GM12878 (cell line): ENCODE measurements at regions of chr3 and their contacts with region 1.

Region 1: GRCh38 chr3:33681667-33682066 is 36.4 kb downstream of the CLASP2 start:
- DNase-seq: no peak
- ATAC-seq: no peak
- H3K4me3 ChIP-seq: no peak overlapping the region
- H3K27ac ChIP-seq: no peak overlapping the region
- H3K4me1 ChIP-seq: no peaks in the 10 kb centered on the region
- H3K27me3 ChIP-seq: no peaks in the 10 kb centered on the region
- CTCF ChIP-seq: no peak
- EP300 ChIP-seq: no peak
- POLR2A ChIP-seq: no peak
- RAD21 ChIP-seq: no peak

Region 2: DNA sequence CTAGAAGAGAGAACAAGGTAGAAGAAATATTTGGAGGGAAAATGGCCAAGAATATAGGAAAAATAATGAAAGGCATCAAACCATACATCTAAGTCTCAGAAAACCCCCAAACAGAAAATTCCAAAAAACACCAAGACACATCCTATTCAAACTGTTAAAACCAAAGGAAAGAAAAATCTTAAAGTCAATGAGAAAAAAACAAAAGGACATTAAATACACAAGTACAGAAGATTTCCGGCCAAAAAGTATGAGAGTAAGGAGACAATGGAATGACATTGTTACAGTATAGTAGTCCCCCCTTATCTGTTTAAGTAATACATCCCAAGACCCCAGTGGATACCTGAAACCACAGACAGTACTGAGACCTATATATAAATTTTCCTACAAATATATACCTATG is 17.6 kb after region 1 on chr3:
- CTCF ChIA-PET with region 1: interaction called, 4 read pairs
- POLR2A ChIA-PET with region 1: no interaction called
- RAD21 ChIA-PET with region 1: no interaction called
- SMC1A ChIA-PET with region 1: no interaction called
- in situ Hi-C with region 1: no loop called
- intact Hi-C with region 1: loop called (anchors 2 kb)
- DNase-seq: no peak
- ATAC-seq: no peak
- H3K4me3 ChIP-seq: no peak overlapping the region
- H3K27ac ChIP-seq: no peak overlapping the region
- H3K4me1 ChIP-seq: no peaks in the 10 kb centered on the region
- H3K27me3 ChIP-seq: no peaks in the 10 kb centered on the region
- CTCF ChIP-seq: no peak
- EP300 ChIP-seq: no peak
- POLR2A ChIP-seq: no peak
- RAD21 ChIP-seq: no peak